ENCODE measurements at regions of chr4 and their contacts with region 1.

Region 1: GRCh38 chr4:13548984-13549546 is 4.8 kb upstream of the NKX3-2 start:
- DNase-seq: peak; percentile 54 to 87 (median 78)
- ATAC-seq: peak; percentile 60
- H3K4me3 ChIP-seq: no peak overlapping the region
- H3K4me3 Mint-ChIP-seq: peak overlapping the region; percentile 54
- H3K27ac ChIP-seq: no peak overlapping the region
- H3K27ac Mint-ChIP-seq: no peak overlapping the region
- H3K4me1 ChIP-seq: peaks cover 11% of the 10 kb centered on the region
- H3K4me1 Mint-ChIP-seq: peaks cover 28% of the 10 kb centered on the region
- H3K27me3 ChIP-seq: peaks cover 32 to 34% of the 10 kb centered on the region in 2 experiments
- H3K27me3 Mint-ChIP-seq: peaks cover 73% of the 10 kb centered on the region
- CTCF ChIP-seq: peak; percentile 90

Region 2: GRCh38 chr4:11765849-11766453 is 1783.1 kb before region 1 on chr4:
- CTCF ChIA-PET with region 1: no interaction called
- POLR2A ChIA-PET with region 1: no interaction called
- intact Hi-C with region 1: loop called in 1 of 2 experiments (anchors 2 kb)
- DNase-seq: peak in 3 of 9 experiments; percentile 11 to 28 (median 19)
- ATAC-seq: no peak
- H3K4me3 ChIP-seq: no peak overlapping the region
- H3K4me3 Mint-ChIP-seq: no peak overlapping the region
- H3K27ac ChIP-seq: no peak overlapping the region
- H3K27ac Mint-ChIP-seq: no peak overlapping the region
- H3K4me1 ChIP-seq: no peaks in the 10 kb centered on the region
- H3K4me1 Mint-ChIP-seq: no peaks in the 10 kb centered on the region
- H3K27me3 ChIP-seq: no peaks in the 10 kb centered on the region
- H3K27me3 Mint-ChIP-seq: no peaks in the 10 kb centered on the region
- CTCF ChIP-seq: peak; percentile 44

Region 3: DNA sequence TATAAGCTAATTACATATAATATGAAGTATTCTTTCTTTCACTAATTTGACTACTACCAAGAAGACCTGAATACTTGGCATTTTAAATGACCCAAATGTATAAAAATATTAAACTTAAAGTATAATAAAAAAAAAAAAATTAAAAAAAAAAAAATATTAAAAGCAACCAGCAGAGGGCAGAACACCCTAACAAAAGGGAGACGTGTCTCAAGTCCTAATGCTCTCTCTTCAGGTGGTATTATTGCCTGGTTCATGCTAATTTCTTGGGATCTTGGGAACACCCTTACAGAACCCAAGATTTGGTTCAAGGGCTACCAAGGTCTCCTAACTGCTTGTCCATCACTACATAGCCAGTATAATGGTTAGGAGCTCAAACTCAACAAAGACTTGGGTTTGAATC is 819.7 kb before region 1 on chr4:
- CTCF ChIA-PET with region 1: interaction called, 5 read pairs
- POLR2A ChIA-PET with region 1: no interaction called
- intact Hi-C with region 1: loop called (anchors 1 kb)
- DNase-seq: peak in 2 of 9 experiments; percentile 13 to 26
- ATAC-seq: no peak
- H3K4me3 ChIP-seq: no peak overlapping the region
- H3K4me3 Mint-ChIP-seq: no peak overlapping the region
- H3K27ac ChIP-seq: no peak overlapping the region
- H3K27ac Mint-ChIP-seq: no peak overlapping the region
- H3K4me1 ChIP-seq: no peaks in the 10 kb centered on the region
- H3K4me1 Mint-ChIP-seq: no peaks in the 10 kb centered on the region
- H3K27me3 ChIP-seq: no peaks in the 10 kb centered on the region
- H3K27me3 Mint-ChIP-seq: peaks cover 21% of the 10 kb centered on the region
- CTCF ChIP-seq: peak; percentile 55

Region 4: DNA sequence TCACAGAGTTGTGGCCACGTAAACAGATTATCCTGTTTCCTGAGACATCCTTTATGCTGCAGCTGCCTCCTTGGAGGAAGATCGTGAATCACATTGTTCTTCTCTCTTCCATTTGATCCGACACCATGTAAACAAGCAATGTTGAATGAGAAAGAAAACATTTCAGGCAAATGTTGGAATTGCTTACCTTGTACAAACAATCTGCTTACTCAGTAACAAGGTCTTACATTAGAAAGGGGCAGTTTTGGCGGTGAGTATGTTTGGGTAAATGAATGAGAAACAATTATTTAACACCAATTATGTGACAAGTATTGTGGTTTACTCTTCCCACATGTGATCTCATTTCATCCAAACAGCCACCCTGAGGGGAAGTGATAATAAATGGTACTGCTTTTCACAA is 702.7 kb before region 1 on chr4:
- CTCF ChIA-PET with region 1: no interaction called
- POLR2A ChIA-PET with region 1: no interaction called
- intact Hi-C with region 1: loop called in 1 of 2 experiments (anchors 5 kb)
- DNase-seq: no peak
- ATAC-seq: no peak
- H3K4me3 ChIP-seq: no peak overlapping the region
- H3K4me3 Mint-ChIP-seq: no peak overlapping the region
- H3K27ac ChIP-seq: no peak overlapping the region
- H3K27ac Mint-ChIP-seq: no peak overlapping the region
- H3K4me1 ChIP-seq: no peaks in the 10 kb centered on the region
- H3K4me1 Mint-ChIP-seq: no peaks in the 10 kb centered on the region
- H3K27me3 ChIP-seq: no peaks in the 10 kb centered on the region
- H3K27me3 Mint-ChIP-seq: peaks cover 6% of the 10 kb centered on the region
- CTCF ChIP-seq: no peak

Region 5: DNA sequence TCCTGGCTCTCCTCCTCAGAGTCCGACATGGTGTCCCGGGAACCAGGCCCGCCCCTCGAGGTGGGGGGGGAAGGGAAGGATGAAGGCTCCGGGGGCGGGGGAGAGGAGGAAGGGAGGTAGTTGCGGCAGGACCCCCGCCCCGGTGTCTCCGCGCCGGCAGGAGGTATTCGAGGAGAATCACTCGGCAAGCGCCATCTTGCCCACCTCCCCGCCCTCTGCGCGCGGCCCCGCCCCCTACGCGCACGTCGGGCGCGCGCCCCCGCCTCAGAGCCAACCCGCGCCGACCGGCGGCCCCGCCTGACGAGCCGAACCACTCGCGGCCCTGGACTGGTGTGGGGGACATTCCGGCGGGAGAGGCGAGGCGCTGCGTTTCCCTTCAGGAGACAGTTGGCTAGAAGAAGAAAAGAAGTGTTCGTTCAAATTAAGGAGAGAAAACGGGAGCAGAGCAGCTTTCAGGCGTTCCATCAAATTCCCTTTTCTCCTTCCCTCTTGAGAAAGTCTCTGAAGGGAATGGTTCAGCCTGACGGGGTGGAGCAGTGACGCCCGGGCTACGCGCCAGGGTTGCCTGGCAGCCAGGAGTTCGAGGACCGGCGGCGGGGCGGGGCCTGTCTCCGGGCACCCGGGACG is 64.8 kb before region 1 on chr4 and contains the start of gene RAB28:
- CTCF ChIA-PET with region 1: no interaction called
- POLR2A ChIA-PET with region 1: no interaction called
- intact Hi-C with region 1: loop called (anchors 1 to 5 kb)
- DNase-seq: peak; percentile 86 to 96 (median 93)
- ATAC-seq: peak; percentile 88
- H3K4me3 ChIP-seq: peak within 1 kb of the TSS; percentile 84 to 96
- H3K4me3 Mint-ChIP-seq: peak within 1 kb of the TSS; percentile 84
- H3K27ac ChIP-seq: peak within 1 kb of the TSS; percentile 99
- H3K27ac Mint-ChIP-seq: peak within 1 kb of the TSS; percentile 100
- H3K4me1 ChIP-seq: peaks cover 15% of the 10 kb centered on the region
- H3K4me1 Mint-ChIP-seq: peaks cover 26% of the 10 kb centered on the region
- H3K27me3 ChIP-seq: no peaks in the 10 kb centered on the region
- H3K27me3 Mint-ChIP-seq: peaks cover 15% of the 10 kb centered on the region
- CTCF ChIP-seq: no peak
- total RNA-seq, gene RAB28: 4.2 to 4.6 TPM

Measured in CD8-positive, alpha-beta T cell (primary cell).